Naive thymus-derived CD8-positive, alpha-beta T cell (primary cell): ENCODE measurements at regions of chr3 and their contacts with region 1.

Region 1: DNA sequence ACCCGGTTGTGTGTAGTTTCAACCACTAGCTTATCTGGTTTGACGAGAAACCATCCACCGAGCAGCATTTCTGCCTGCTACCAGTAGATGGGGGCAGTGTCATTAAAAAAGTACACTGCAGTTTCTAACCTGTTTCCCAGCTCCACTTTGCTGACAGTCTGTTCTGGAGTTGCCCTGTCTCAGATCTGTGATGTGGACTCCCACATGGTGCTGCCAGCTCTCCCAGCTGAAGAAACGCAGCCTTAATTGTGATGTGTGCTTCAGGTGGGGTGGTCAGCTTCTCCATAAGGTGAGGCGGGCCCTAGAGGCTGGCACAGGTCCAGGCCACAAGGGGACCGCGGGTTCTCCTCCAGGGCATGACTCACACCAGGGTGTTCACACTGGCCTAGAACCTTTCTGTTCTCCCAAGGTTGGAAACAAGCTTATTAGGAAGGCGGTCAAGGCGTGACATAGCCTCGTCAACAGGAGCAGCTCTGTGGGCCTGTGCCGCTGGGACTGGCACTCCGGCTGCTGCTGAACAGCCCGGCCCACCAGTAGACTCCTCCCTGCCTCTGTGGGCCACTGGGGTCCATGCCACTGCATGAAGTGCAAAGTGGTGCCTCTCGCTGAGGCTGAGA is 2.9 kb upstream of the FAM43A start:
- DNase-seq: peak; percentile 20 to 82 (median 62)
- ATAC-seq: peak; percentile 74 to 78
- H3K4me3 Mint-ChIP-seq: peak overlapping the region in 1 of 10 donors; percentile 12
- H3K27ac Mint-ChIP-seq: peak overlapping the region in 5 of 10 donors; percentile 7 to 79 (median 16)
- H3K4me1 Mint-ChIP-seq: peaks cover 20 to 41% (median 35%) of the 10 kb centered on the region in 4 donors
- H3K27me3 Mint-ChIP-seq: peaks cover 0 to 24% (median 2%) of the 10 kb centered on the region in 5 donors

Region 2: DNA sequence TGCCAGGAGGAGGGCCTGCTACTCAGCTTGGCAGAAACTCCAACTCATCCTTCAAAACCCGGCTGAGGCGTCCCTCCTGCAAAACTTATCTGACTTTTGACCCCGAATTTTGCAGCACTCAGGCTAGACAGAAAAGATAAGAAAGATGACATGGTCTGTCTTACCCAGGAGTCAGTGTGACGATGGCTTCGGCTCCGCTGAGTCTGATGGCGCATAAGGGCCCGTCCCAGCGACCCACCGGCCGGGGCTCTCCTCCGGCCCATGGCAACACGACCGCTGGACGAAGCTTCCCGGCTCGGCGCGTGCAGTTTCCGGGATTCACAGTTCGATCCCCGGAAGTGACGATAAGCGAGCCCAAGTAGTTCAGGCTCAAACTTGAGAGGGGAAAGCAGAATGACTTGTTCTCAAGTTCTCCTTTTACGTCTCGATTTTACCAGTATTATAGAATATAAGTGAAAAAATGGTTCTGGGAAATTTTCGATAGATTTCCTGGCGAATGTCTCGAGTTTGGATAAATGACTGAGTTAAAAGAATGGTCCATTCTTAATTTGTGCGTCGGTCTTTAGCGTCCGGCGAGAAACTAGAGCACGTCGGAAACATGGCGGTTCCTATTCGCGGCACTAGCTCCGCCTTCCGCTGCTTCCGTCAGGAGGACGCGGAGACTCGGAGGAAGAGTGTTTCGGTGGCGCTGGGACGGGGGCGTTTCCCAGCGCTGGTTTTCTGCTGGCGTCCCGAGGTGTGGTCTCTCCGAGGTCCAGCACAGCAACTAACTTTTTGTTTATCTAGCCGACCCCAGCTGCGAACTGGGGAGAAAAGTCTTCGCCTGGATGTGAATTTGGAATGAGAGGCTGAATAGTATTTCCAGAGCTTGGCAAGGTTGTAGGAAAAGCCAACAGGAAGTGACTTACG is 10.6 kb before region 1 on chr3 and contains the start of gene LSG1:
- POLR2A ChIA-PET with region 1: interaction called, 31 read pairs
- DNase-seq: peak; percentile 73 to 95 (median 86)
- ATAC-seq: peak; percentile 94 to 95
- H3K4me3 Mint-ChIP-seq: peak within 1 kb of the TSS; percentile 96 to 100 (median 98)
- H3K27ac Mint-ChIP-seq: peak within 1 kb of the TSS; percentile 95 to 100 (median 99)
- H3K4me1 Mint-ChIP-seq: peaks cover 18 to 42% (median 34%) of the 10 kb centered on the region in 4 donors
- H3K27me3 Mint-ChIP-seq: peaks cover 0 to 7% (median 0%) of the 10 kb centered on the region in 5 donors
- polyA plus RNA-seq, gene LSG1: 23.0 to 42.8 (median 24.8) TPM

Region 3: DNA sequence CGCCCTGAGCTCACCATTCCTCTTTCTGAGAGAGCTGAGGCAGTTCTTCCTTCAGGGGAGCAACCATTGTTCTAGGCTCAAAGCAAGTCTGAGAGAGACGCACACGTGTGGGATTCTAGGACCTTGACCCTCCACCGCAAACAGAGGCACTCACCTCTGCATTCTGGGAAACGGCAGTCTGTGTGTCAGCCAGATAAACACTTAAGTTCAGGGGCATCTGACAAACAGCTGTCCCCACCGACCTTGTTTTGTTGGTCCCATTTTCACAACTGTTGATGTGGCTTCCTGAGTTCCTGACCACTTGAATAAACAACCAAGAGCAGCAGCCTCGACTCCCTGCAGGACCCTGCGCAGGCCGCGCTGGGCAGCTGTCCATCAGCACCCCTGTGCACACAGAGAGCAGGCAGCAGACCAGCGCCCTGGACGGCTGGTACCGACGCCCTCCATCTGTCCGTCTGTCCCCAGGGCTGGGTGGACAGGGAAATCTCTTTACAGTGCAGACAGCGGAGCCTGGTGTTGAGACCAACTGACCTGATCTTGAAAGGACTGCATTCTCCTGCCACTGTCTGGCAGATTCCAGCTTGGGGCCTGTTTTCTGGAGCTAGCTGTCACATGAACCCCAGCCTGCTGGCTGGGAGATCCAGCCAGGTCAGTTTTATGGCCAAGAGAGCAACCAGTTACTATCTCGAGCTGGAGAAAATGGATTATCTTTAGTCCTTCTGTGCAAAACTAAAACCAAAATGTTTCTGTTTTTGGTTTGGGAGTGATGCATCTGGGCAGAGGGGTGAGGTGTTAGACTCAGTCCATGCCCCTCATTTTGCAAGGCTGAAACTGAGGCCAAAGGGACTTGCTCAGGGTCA is 67.1 kb after region 1 on chr3:
- POLR2A ChIA-PET with region 1: no interaction called
- DNase-seq: no peak
- ATAC-seq: no peak
- H3K4me3 Mint-ChIP-seq: no peak overlapping the region
- H3K27ac Mint-ChIP-seq: peak overlapping the region in 1 of 10 donors; percentile 40
- H3K4me1 Mint-ChIP-seq: peaks cover 0 to 7% (median 0%) of the 10 kb centered on the region in 4 donors
- H3K27me3 Mint-ChIP-seq: peaks cover 0 to 4% (median 0%) of the 10 kb centered on the region in 5 donors

Region 4: GRCh38 chr3:194801461-194802432 is 118.9 kb after region 1 on chr3:
- POLR2A ChIA-PET with region 1: no interaction called
- DNase-seq: no peak
- ATAC-seq: no peak
- H3K4me3 Mint-ChIP-seq: no peak overlapping the region
- H3K27ac Mint-ChIP-seq: no peak overlapping the region
- H3K4me1 Mint-ChIP-seq: peaks cover 0 to 3% (median 0%) of the 10 kb centered on the region in 4 donors
- H3K27me3 Mint-ChIP-seq: peaks cover 5 to 23% (median 11%) of the 10 kb centered on the region in 5 donors

Region 5: GRCh38 chr3:195259475-195260279 is 576.9 kb after region 1 on chr3:
- POLR2A ChIA-PET with region 1: interaction called, 10 read pairs
- DNase-seq: peak; percentile 84 to 95 (median 92)
- ATAC-seq: peak; percentile 80 to 81
- H3K4me3 Mint-ChIP-seq: peak overlapping the region; percentile 56 to 76 (median 69)
- H3K27ac Mint-ChIP-seq: peak overlapping the region; percentile 70 to 95 (median 90)
- H3K4me1 Mint-ChIP-seq: peaks cover 20 to 39% (median 36%) of the 10 kb centered on the region in 4 donors
- H3K27me3 Mint-ChIP-seq: no peaks in the 10 kb centered on the region